HepG2 (cell line): ENCODE measurements at regions of chr3 and their contacts with region 1.

Region 1: GRCh38 chr3:151197981-151198767 is 4.8 kb downstream of the GPR171 start:
- DNase-seq: peak; percentile 99
- ATAC-seq: peak; percentile 99
- H3K4me3 ChIP-seq: peak overlapping the region in 2 of 3 experiments; percentile 18 to 44; a peak in 2 of 6 replicates
- H3K27ac ChIP-seq: peak overlapping the region; percentile 89
- H3K4me1 ChIP-seq: peaks cover 61% of the 10 kb centered on the region
- H3K27me3 ChIP-seq: no peaks in the 10 kb centered on the region
- CTCF ChIP-seq: no peak
- EP300 ChIP-seq: peak; percentile 87 to 98
- POLR2A ChIP-seq: no peak
- RAD21 ChIP-seq: no peak; the same call in 1 of the 2 replicates

Region 2: GRCh38 chr3:149790268-149790667 is 1407.9 kb before region 1 on chr3:
- CTCF ChIA-PET with region 1: no interaction called
- POLR2A ChIA-PET with region 1: no interaction called
- in situ Hi-C with region 1: no loop called
- intact Hi-C with region 1: loop called (anchors 5 kb)
- DNase-seq: no peak
- ATAC-seq: peak; percentile 50
- H3K4me3 ChIP-seq: no peak overlapping the region
- H3K27ac ChIP-seq: no peak overlapping the region
- H3K4me1 ChIP-seq: peaks cover 28% of the 10 kb centered on the region
- H3K27me3 ChIP-seq: no peaks in the 10 kb centered on the region
- CTCF ChIP-seq: no peak
- EP300 ChIP-seq: no peak
- POLR2A ChIP-seq: no peak
- RAD21 ChIP-seq: no peak

Region 3: GRCh38 chr3:151178208-151178845 is 19.8 kb before region 1 on chr3:
- CTCF ChIA-PET with region 1: no interaction called
- POLR2A ChIA-PET with region 1: interaction called, 54 read pairs
- in situ Hi-C with region 1: no loop called
- intact Hi-C with region 1: loop called (anchors 1 kb)
- DNase-seq: peak; percentile 97
- ATAC-seq: peak; percentile 100
- H3K4me3 ChIP-seq: peak overlapping the region in 1 of 3 experiments; percentile 23; a peak in 2 of 6 replicates
- H3K27ac ChIP-seq: peak overlapping the region; percentile 73
- H3K4me1 ChIP-seq: peaks cover 74% of the 10 kb centered on the region
- H3K27me3 ChIP-seq: no peaks in the 10 kb centered on the region
- CTCF ChIP-seq: no peak
- EP300 ChIP-seq: peak; percentile 41 to 84; a peak in 3 of 4 replicates
- POLR2A ChIP-seq: no peak
- RAD21 ChIP-seq: no peak

Region 4: DNA sequence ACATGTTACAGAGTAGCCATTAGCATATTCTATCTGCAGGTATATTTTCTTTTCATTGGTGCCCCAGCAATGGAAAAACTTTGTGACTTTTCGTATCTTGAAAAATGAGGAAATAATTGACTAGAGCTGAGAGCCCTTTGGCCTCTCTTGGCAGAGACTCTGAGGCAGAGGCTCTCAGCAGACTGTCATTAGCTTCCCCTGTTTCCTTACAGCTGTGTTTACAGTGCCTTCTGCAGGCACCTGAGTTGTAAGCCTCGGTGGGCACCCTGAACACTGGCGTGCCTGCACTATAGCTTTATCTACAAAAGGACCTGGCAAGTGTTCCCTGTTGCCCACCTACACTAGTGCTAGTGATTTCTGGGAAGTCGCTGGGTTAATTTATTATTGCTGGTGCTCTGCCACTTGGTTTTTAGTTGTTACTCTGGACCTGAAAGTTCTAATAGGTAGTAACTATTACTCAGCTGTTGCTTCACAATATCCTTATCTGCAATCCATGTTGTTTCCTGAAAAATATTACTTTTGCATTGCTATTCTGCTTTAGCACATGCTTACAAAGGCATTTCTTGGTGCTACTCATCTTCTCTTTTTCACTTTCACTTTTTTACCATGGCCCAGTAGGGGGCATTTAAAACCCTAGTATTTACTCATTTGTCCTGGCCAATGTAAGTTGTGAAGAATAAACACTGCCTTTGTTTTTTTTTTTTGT is 12.7 kb after region 1 on chr3:
- CTCF ChIA-PET with region 1: no interaction called
- POLR2A ChIA-PET with region 1: interaction called, 15 read pairs
- in situ Hi-C with region 1: no loop called
- intact Hi-C with region 1: no loop called
- DNase-seq: peak; percentile 35
- ATAC-seq: peak; percentile 98
- H3K4me3 ChIP-seq: peak overlapping the region; percentile 5 to 48 (median 41); a peak in 5 of 6 replicates
- H3K27ac ChIP-seq: peak overlapping the region; percentile 53
- H3K4me1 ChIP-seq: peaks cover 23% of the 10 kb centered on the region
- H3K27me3 ChIP-seq: no peaks in the 10 kb centered on the region
- CTCF ChIP-seq: peak; percentile 71
- EP300 ChIP-seq: no peak
- POLR2A ChIP-seq: no peak
- RAD21 ChIP-seq: no peak; the same call in 1 of the 2 replicates

Region 5: GRCh38 chr3:151227807-151228665 is 29.9 kb after region 1 on chr3:
- CTCF ChIA-PET with region 1: no interaction called
- POLR2A ChIA-PET with region 1: interaction called, 7 read pairs
- in situ Hi-C with region 1: no loop called
- intact Hi-C with region 1: loop called (anchors 1 kb)
- DNase-seq: peak; percentile 67
- ATAC-seq: peak; percentile 94
- H3K4me3 ChIP-seq: no peak overlapping the region
- H3K27ac ChIP-seq: no peak overlapping the region
- H3K4me1 ChIP-seq: peaks cover 34% of the 10 kb centered on the region
- H3K27me3 ChIP-seq: no peaks in the 10 kb centered on the region; a peak in 1 of 5 replicates
- CTCF ChIP-seq: peak; percentile 92
- EP300 ChIP-seq: no peak
- POLR2A ChIP-seq: no peak
- RAD21 ChIP-seq: peak; percentile 93

Region 6: GRCh38 chr3:152268555-152269425 is 1070.6 kb after region 1 on chr3 and contains the start of gene MBNL1:
- CTCF ChIA-PET with region 1: no interaction called
- POLR2A ChIA-PET with region 1: no interaction called
- in situ Hi-C with region 1: no loop called
- intact Hi-C with region 1: no loop called
- DNase-seq: peak; percentile 70
- ATAC-seq: peak; percentile 81
- H3K4me3 ChIP-seq: peak within 1 kb of the TSS; percentile 81 to 87 (median 86)
- H3K27ac ChIP-seq: peak within 1 kb of the TSS; percentile 97
- H3K4me1 ChIP-seq: peaks cover 56% of the 10 kb centered on the region
- H3K27me3 ChIP-seq: no peaks in the 10 kb centered on the region
- CTCF ChIP-seq: no peak
- EP300 ChIP-seq: no peak
- POLR2A ChIP-seq: peak; percentile 85 to 93
- RAD21 ChIP-seq: 0 out of 2 replicates have a peak, but pooled peaks have one; percentile 10
- total RNA-seq, gene MBNL1: 55.4 TPM in 2 replicates